ENCODE measurements at regions of chr10 and their contacts with region 1.

Region 1: DNA sequence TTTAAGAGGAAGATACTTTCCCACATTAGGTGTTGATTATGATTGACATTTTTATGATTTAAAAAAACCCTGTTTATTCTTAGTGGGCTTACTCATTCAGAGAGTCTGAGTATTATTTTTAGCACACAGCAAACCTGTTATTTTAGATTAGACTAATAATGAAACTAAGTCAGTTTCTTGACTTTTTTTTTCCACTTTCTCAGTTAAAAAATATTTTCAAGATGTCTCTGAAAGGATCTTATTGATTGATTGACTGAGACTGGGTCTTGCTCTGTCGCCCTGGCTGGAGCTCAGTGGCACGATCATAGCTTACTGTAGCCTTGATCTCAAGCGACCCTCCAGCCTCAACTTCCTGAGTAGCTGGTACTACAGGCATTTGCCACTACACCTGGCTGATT is 20.4 kb upstream of the INPP5F start:
- DNase-seq: peak; percentile 76
- ATAC-seq: peak; percentile 40
- H3K4me3 ChIP-seq: no peak overlapping the region; the same call in 1 of the 2 replicates
- H3K27ac ChIP-seq: peak overlapping the region; percentile 92
- H3K4me1 ChIP-seq: peaks cover 72% of the 10 kb centered on the region
- H3K27me3 ChIP-seq: no peaks in the 10 kb centered on the region
- CTCF ChIP-seq: no peak
- EP300 ChIP-seq: peak; percentile 94 to 100
- POLR2A ChIP-seq: no peak
- RAD21 ChIP-seq: no peak

Region 2: DNA sequence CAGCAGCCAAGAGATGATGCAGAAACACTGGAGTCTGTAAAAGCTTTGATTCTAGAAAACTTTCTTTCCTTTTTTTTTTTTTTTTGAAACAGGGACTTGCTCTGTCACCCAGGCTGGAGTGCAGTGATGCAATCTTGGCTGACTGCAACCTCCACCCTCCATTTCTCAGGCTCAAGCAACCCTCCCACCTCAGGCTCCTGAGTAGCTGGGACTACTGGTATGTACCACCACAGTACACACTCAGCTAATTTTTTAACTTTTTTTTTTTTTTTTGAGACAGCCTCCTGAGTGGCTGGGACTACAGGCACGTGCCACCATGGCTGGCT is 71.3 kb before region 1 on chr10:
- CTCF ChIA-PET with region 1: no interaction called
- POLR2A ChIA-PET with region 1: no interaction called
- RAD21 ChIA-PET with region 1: no interaction called
- SMC1A ChIA-PET with region 1: no interaction called
- in situ Hi-C with region 1: no loop called
- intact Hi-C with region 1: no loop called
- DNase-seq: no peak
- ATAC-seq: no peak
- H3K4me3 ChIP-seq: no peak overlapping the region
- H3K27ac ChIP-seq: no peak overlapping the region
- H3K4me1 ChIP-seq: no peaks in the 10 kb centered on the region
- H3K27me3 ChIP-seq: no peaks in the 10 kb centered on the region
- CTCF ChIP-seq: no peak
- EP300 ChIP-seq: no peak
- POLR2A ChIP-seq: no peak
- RAD21 ChIP-seq: no peak

Region 3: GRCh38 chr10:119693262-119693957 is 12.0 kb before region 1 on chr10:
- CTCF ChIA-PET with region 1: interaction called, 13 read pairs
- POLR2A ChIA-PET with region 1: interaction called, 17 read pairs
- RAD21 ChIA-PET with region 1: interaction called, 26 read pairs
- SMC1A ChIA-PET with region 1: interaction called, 47 read pairs
- in situ Hi-C with region 1: no loop called
- intact Hi-C with region 1: no loop called
- DNase-seq: no peak
- ATAC-seq: peak; percentile 98
- H3K4me3 ChIP-seq: no peak overlapping the region
- H3K27ac ChIP-seq: no peak overlapping the region
- H3K4me1 ChIP-seq: peaks cover 9% of the 10 kb centered on the region
- H3K27me3 ChIP-seq: no peaks in the 10 kb centered on the region
- CTCF ChIP-seq: no peak
- EP300 ChIP-seq: peak in 1 of 2 experiments; percentile 65; a peak in 2 of 4 replicates
- POLR2A ChIP-seq: no peak
- RAD21 ChIP-seq: no peak

Region 4: GRCh38 chr10:119715628-119716505 is 10.4 kb after region 1 on chr10:
- CTCF ChIA-PET with region 1: interaction called, 5 read pairs
- POLR2A ChIA-PET with region 1: interaction called, 12 read pairs
- RAD21 ChIA-PET with region 1: interaction called, 5 read pairs
- SMC1A ChIA-PET with region 1: interaction called, 29 read pairs
- in situ Hi-C with region 1: no loop called
- intact Hi-C with region 1: no loop called
- DNase-seq: no peak
- ATAC-seq: no peak
- H3K4me3 ChIP-seq: no peak overlapping the region
- H3K27ac ChIP-seq: no peak overlapping the region
- H3K4me1 ChIP-seq: no peaks in the 10 kb centered on the region
- H3K27me3 ChIP-seq: no peaks in the 10 kb centered on the region
- CTCF ChIP-seq: no peak
- EP300 ChIP-seq: no peak
- POLR2A ChIP-seq: no peak
- RAD21 ChIP-seq: no peak

Region 5: GRCh38 chr10:119737827-119738226 is 32.4 kb after region 1 on chr10:
- CTCF ChIA-PET with region 1: interaction called, 4 read pairs
- POLR2A ChIA-PET with region 1: interaction called, 4 read pairs
- RAD21 ChIA-PET with region 1: interaction called, 7 read pairs
- SMC1A ChIA-PET with region 1: interaction called, 7 read pairs
- in situ Hi-C with region 1: no loop called
- intact Hi-C with region 1: loop called (anchors 5 kb)
- DNase-seq: no peak
- ATAC-seq: peak; percentile 39
- H3K4me3 ChIP-seq: no peak overlapping the region
- H3K27ac ChIP-seq: no peak overlapping the region
- H3K4me1 ChIP-seq: no peaks in the 10 kb centered on the region
- H3K27me3 ChIP-seq: no peaks in the 10 kb centered on the region
- CTCF ChIP-seq: no peak
- EP300 ChIP-seq: no peak
- POLR2A ChIP-seq: no peak
- RAD21 ChIP-seq: no peak

Region 6: GRCh38 chr10:119784340-119785070 is 79.1 kb after region 1 on chr10:
- CTCF ChIA-PET with region 1: interaction called, 3 read pairs
- POLR2A ChIA-PET with region 1: interaction called, 16 read pairs
- RAD21 ChIA-PET with region 1: interaction called, 8 read pairs
- SMC1A ChIA-PET with region 1: interaction called, 6 read pairs
- in situ Hi-C with region 1: no loop called
- intact Hi-C with region 1: loop called (anchors 2 kb)
- DNase-seq: peak; percentile 54
- ATAC-seq: peak; percentile 91
- H3K4me3 ChIP-seq: no peak overlapping the region
- H3K27ac ChIP-seq: peak overlapping the region; percentile 7; the same call in 1 of the 2 replicates
- H3K4me1 ChIP-seq: peaks cover 14% of the 10 kb centered on the region
- H3K27me3 ChIP-seq: no peaks in the 10 kb centered on the region
- CTCF ChIP-seq: no peak
- EP300 ChIP-seq: peak; percentile 71 to 84; a peak in 3 of 4 replicates
- POLR2A ChIP-seq: no peak
- RAD21 ChIP-seq: no peak

Region 7: GRCh38 chr10:120077707-120078492 is 372.5 kb after region 1 on chr10:
- CTCF ChIA-PET with region 1: no interaction called
- POLR2A ChIA-PET with region 1: no interaction called
- RAD21 ChIA-PET with region 1: no interaction called
- SMC1A ChIA-PET with region 1: no interaction called
- in situ Hi-C with region 1: no loop called
- intact Hi-C with region 1: no loop called
- DNase-seq: peak; percentile 9
- ATAC-seq: peak; percentile 43; the same call in 2 of the 3 replicates
- H3K4me3 ChIP-seq: no peak overlapping the region
- H3K27ac ChIP-seq: no peak overlapping the region
- H3K4me1 ChIP-seq: no peaks in the 10 kb centered on the region
- H3K27me3 ChIP-seq: 0 out of 4 replicates have a peak, but pooled peaks cover 0 to 3% of the 10 kb centered on the region in 2 experiments
- CTCF ChIP-seq: no peak
- EP300 ChIP-seq: no peak
- POLR2A ChIP-seq: no peak
- RAD21 ChIP-seq: no peak